Activated CD4-positive, alpha-beta memory T cell treated with anti-CD3 and anti-CD28 coated beads, Interleukin-2, amount 10 ng/mL, durations not matched to agents 7 days and 5 days (primary cell): ENCODE measurements at regions of chr6 and their contacts with region 1.

Region 1: GRCh38 chr6:111804627-111805235 is 68.5 kb downstream of the FYN start:
- DNase-seq: peak; percentile 83
- H3K4me3 Mint-ChIP-seq: peak overlapping the region; percentile 40
- H3K27ac Mint-ChIP-seq: peak overlapping the region; percentile 86
- H3K4me1 Mint-ChIP-seq: peaks cover 77% of the 10 kb centered on the region
- H3K27me3 Mint-ChIP-seq: no peaks in the 10 kb centered on the region

Region 2: GRCh38 chr6:111750753-111751684 is 53.7 kb before region 1 on chr6:
- CTCF ChIA-PET with region 1: no interaction called
- POLR2A ChIA-PET with region 1: interaction called, 11 read pairs
- DNase-seq: peak; percentile 75
- H3K4me3 Mint-ChIP-seq: peak overlapping the region; percentile 52
- H3K27ac Mint-ChIP-seq: peak overlapping the region; percentile 98
- H3K4me1 Mint-ChIP-seq: peaks cover 93% of the 10 kb centered on the region
- H3K27me3 Mint-ChIP-seq: no peaks in the 10 kb centered on the region

Region 3: DNA sequence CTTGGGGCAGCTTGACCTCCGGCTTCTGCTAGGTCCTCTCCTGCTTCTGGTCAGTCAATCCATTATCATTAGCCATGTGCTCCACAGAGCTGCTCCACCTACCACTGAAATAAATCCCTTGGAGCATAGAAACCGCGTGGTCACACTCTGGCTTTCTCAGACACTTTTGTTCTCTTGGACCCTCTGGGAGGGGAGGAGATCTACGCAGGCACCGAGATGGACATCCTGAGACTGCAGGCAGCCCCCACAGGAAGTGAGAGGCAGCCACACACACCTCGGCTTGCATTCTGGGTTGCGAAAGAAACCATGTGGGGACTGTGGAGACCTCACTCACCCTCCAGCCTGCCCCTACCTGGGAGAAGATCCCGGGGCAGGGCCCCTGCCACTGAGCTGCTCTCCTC is 11.0 kb before region 1 on chr6:
- CTCF ChIA-PET with region 1: interaction called, 4 read pairs
- POLR2A ChIA-PET with region 1: interaction called, 12 read pairs
- DNase-seq: peak; percentile 68
- H3K4me3 Mint-ChIP-seq: peak overlapping the region; percentile 73
- H3K27ac Mint-ChIP-seq: peak overlapping the region; percentile 87
- H3K4me1 Mint-ChIP-seq: peaks cover 65% of the 10 kb centered on the region
- H3K27me3 Mint-ChIP-seq: no peaks in the 10 kb centered on the region

Region 4: GRCh38 chr6:111818539-111819226 is 14.0 kb after region 1 on chr6:
- CTCF ChIA-PET with region 1: interaction called, 7 read pairs
- POLR2A ChIA-PET with region 1: interaction called, 20 read pairs
- DNase-seq: no peak
- H3K4me3 Mint-ChIP-seq: no peak overlapping the region
- H3K27ac Mint-ChIP-seq: peak overlapping the region; percentile 34
- H3K4me1 Mint-ChIP-seq: peaks cover 49% of the 10 kb centered on the region
- H3K27me3 Mint-ChIP-seq: no peaks in the 10 kb centered on the region

Region 5: DNA sequence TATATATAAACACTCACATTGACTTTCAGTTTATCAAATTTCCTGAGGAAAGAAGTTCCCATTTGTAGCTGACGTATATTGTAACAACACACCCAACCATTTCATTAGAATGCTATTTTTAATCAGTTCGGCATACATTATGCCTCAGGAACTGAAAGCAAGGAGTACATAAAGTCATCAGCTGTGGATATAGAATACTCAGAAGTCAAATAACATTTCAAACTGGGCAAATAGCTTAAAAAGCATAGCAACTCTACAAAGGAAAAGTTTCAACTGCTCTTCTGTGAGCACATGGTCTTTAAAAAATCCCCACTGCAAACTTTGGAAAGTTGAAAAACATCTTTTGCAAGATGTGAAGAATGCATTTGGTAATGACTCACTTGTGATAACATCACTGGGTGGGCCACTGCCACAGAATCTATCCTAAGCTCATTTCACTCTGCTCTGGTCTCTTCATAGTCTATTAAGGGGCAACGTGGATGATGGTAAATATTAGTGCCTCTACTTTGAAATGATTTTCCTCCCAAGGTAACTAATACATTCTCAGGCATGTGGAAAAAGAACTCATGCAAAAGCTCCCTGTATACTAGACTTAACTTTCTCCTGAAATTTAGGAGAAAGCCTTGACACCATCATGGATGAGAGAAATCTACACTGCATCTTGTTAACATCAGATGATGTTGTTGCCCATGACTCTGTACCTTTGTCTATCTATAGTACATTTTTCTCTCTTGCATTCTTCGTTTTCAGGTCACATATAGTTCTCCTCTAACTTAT is 19.3 kb after region 1 on chr6:
- CTCF ChIA-PET with region 1: interaction called, 7 read pairs
- POLR2A ChIA-PET with region 1: interaction called, 16 read pairs
- DNase-seq: no peak
- H3K4me3 Mint-ChIP-seq: peak overlapping the region; percentile 18
- H3K27ac Mint-ChIP-seq: peak overlapping the region; percentile 58
- H3K4me1 Mint-ChIP-seq: peaks cover 52% of the 10 kb centered on the region
- H3K27me3 Mint-ChIP-seq: no peaks in the 10 kb centered on the region

Region 6: GRCh38 chr6:111841822-111842221 is 37.1 kb after region 1 on chr6:
- CTCF ChIA-PET with region 1: interaction called, 3 read pairs
- POLR2A ChIA-PET with region 1: interaction called, 40 read pairs
- DNase-seq: peak; percentile 77
- H3K4me3 Mint-ChIP-seq: no peak overlapping the region
- H3K27ac Mint-ChIP-seq: no peak overlapping the region
- H3K4me1 Mint-ChIP-seq: peaks cover 36% of the 10 kb centered on the region
- H3K27me3 Mint-ChIP-seq: no peaks in the 10 kb centered on the region

Region 7: DNA sequence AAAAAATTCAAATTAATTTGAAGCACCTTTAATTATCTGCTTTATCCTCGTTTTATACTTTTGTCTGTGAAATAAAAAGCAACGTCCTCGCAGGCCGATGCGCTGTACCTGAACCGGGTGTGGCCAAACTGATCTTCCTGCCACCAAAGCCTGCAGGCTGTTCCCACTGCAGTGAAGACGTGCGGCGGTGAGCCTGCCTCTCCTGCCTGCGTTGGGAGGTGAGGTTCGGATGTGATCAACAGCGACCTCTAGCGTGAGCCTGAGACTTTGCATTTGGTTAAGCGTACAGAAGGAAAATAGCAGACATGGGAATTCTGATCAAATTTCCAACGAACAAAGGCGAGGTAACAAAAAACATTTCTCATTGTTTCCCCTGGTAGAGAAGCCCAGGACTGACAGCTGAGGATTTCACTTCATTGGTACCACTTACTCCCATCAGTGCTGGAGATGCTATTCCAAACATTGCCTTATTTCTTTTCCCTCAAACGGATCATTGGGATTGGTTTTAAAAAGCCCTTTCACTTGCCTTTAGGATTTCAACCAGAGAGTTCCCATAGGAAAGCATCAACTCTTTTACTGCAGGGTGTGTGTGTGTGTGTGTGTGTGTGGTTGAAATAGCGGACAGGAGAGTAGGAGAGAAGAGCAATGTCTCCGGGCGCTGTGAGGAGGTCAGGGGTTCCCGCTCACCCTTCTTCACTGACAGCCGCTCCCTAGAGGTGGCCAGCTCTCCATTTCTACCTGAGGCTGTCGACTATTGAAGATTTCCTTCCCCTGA is 192.5 kb after region 1 on chr6:
- CTCF ChIA-PET with region 1: interaction called, 4 read pairs
- POLR2A ChIA-PET with region 1: interaction called, 13 read pairs
- DNase-seq: peak; percentile 82
- H3K4me3 Mint-ChIP-seq: no peak overlapping the region
- H3K27ac Mint-ChIP-seq: no peak overlapping the region
- H3K4me1 Mint-ChIP-seq: peaks cover 40% of the 10 kb centered on the region
- H3K27me3 Mint-ChIP-seq: no peaks in the 10 kb centered on the region